ENCODE measurements at regions of chr13 and their contacts with region 1.

Region 1: DNA sequence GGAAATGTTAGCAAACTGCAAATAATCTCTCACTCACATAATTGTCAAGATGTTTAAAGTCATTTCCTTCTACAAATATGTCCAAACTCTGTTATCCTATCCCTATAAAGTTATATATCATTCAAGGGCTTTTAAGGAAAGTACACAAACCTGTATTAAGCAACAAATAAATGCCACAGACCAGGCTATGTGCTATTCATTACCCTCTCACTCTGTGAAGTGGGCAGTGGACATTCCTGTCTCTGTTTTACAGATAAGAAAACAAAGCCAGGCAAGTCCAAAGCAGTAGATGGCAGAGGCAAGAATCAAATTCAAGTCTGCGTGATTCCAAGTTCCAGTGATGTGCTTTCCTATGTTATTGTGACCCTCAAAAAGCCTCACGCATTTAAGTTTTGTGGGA is 140.6 kb downstream of the LHFPL6 start:
- DNase-seq: no peak
- H3K4me3 ChIP-seq: no peak overlapping the region
- H3K27ac ChIP-seq: peak overlapping the region in 1 of 2 donors; percentile 43
- H3K4me1 ChIP-seq: no peaks in the 10 kb centered on the region
- H3K27me3 ChIP-seq: no peaks in the 10 kb centered on the region
- CTCF ChIP-seq: no peak
- POLR2A ChIP-seq: no peak

Region 2: GRCh38 chr13:39494006-39494405 is 31.6 kb after region 1 on chr13:
- intact Hi-C with region 1: loop called (anchors 1 kb)
- DNase-seq: no peak
- H3K4me3 ChIP-seq: no peak overlapping the region
- H3K27ac ChIP-seq: no peak overlapping the region
- H3K4me1 ChIP-seq: no peaks in the 10 kb centered on the region
- H3K27me3 ChIP-seq: no peaks in the 10 kb centered on the region
- CTCF ChIP-seq: no peak
- POLR2A ChIP-seq: no peak